ENCODE measurements at regions of chr6 and their contacts with region 1.

Region 1: DNA sequence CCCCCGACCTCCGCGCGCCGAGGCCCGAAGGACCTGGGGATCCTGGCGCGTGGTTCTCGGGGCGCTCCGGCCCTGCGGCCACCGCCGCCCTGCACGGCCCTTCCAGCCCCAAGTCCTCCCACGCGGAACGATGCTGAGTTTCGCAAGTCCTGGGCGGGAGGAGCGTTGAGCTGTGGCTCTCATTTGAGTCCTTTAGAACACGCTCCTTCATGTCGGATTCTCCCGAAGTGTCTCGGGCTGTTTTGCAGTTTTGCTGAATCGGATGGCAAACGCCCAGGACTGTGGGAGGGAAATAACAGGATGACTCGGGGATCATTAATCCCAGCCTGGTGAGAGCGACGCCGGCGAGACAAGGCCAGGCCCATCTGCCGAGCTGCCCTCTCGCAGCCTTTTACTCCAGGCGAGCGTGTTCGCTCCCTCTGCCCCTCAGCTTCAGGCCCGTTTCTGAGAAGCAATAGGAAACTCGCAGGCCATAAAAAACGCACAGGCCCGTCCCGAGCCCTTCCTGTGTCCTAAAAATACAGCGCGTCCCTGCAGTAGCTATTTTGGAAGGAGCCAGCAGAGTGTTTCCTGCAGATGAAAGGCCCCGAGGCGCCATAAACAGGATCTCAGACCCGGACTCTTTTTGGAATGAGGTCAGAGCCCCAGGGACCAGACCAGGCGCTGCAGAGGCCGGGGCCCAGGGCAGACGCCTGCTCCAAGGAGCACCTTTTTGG is 153.5 kb downstream of the DLL1 start:
- DNase-seq: no peak
- ATAC-seq: peak; percentile 70

Region 2: GRCh38 chr6:170043881-170044790 is 93.2 kb before region 1 on chr6:
- intact Hi-C with region 1: loop called (anchors 2 kb)
- DNase-seq: peak; percentile 56
- ATAC-seq: peak; percentile 42

Region 3: DNA sequence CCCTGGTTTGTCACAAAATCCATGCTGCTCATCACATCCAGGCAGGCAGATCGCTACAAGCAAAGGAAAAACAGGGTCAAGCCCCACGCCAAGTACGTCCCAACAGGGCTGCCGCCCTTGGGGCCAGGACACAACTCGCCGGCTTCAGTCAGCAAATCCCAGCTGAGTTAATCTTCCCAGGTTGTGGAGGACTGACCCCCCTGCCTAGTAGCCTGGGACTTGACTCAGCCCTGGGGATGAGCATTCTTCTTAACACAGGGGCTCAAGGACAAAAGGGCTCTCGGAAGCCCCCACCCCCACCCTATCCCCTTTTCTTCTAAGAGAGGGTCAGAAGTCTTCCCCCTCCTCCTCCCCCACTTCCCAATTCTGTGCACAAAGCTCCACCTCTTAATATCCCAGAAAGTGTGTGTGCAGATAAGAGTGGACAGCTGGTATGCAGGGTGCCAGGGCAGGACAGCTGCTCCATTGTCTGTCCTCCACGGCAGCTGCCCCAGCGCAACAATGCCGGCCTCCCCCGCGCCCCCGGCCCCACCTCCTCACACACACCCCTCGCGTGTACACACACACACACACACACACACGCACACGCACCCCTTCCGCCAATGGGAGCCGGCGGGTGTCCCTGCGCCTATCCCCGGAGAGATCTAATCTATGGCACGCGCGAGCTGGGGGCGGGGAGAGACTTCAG is 149.1 kb after region 1 on chr6:
- intact Hi-C with region 1: loop called (anchors 5 kb)
- DNase-seq: peak; percentile 81
- ATAC-seq: peak; percentile 27

Measured in Right ventricle myocardium inferior (tissue), 1 donor.